Gastrocnemius medialis (tissue), 4 donors: ENCODE measurements at regions of chr15 and their contacts with region 1.

Region 1: DNA sequence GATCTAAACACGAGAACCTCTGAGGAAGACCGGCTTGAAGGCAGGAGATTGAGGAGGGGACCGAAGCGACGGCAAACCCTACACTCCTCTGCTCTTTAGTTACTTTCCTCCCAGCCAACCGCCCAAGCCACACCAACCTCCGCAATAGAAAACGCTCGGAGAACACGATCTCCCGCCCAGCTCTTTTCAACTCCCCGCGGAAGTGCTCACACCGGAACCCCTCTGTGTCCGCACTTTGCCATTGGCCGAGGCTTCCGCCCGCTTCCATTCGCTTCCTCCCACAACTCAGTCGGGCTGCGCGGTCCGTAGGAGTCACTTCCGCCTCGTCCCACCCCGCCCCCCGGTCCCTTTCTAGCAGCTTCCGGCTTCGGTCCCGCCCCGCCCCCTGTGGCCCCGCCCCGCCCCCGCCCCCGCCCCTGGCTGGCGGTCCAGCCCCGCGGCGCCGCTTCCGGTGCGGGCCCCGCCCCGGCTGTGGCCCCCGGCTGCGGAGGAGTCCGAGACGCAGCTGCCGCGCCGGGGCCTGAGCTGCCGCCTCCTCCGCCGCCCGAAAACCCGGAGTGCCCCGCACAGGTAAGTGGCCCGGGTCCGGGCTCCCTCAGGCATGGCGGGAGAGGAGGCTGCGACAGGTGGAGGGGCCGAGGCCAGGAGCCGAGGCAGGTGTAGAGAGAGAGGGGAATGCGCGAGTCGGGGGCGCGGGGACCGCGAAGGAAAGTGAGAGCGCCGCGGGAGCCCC is at the start of gene ARID3B:
- DNase-seq: peak; percentile 97
- ATAC-seq: peak; percentile 96 to 99
- H3K4me3 ChIP-seq: peak within 1 kb of the TSS; percentile 79 to 100 (median 91)
- H3K27ac ChIP-seq: peak within 1 kb of the TSS; percentile 81 to 90 (median 86)
- H3K4me1 ChIP-seq: peaks cover 22 to 24% of the 10 kb centered on the region in 2 donors
- H3K27me3 ChIP-seq: no peaks in the 10 kb centered on the region
- CTCF ChIP-seq: no peak
- POLR2A ChIP-seq: peak; percentile 64 to 77
- total RNA-seq, gene ARID3B: 1.8 to 6.7 (median 4.6) TPM

Region 2: GRCh38 chr15:73991726-73992593 is 549.0 kb before region 1 on chr15 and contains the start of gene STOML1:
- in situ Hi-C with region 1: no loop called
- intact Hi-C with region 1: loop called (anchors 5 kb)
- DNase-seq: peak; percentile 76 to 90
- ATAC-seq: peak; percentile 75 to 77
- H3K4me3 ChIP-seq: peak within 1 kb of the TSS; percentile 82 to 96 (median 91)
- H3K27ac ChIP-seq: peak within 1 kb of the TSS; percentile 88 to 94 (median 90)
- H3K4me1 ChIP-seq: peaks cover 65 to 78% of the 10 kb centered on the region in 2 donors
- H3K27me3 ChIP-seq: no peaks in the 10 kb centered on the region
- CTCF ChIP-seq: peak; percentile 81 to 97 (median 96)
- POLR2A ChIP-seq: peak; percentile 77
- total RNA-seq, gene STOML1: 15.2 to 28.8 (median 16.9) TPM

Region 3: DNA sequence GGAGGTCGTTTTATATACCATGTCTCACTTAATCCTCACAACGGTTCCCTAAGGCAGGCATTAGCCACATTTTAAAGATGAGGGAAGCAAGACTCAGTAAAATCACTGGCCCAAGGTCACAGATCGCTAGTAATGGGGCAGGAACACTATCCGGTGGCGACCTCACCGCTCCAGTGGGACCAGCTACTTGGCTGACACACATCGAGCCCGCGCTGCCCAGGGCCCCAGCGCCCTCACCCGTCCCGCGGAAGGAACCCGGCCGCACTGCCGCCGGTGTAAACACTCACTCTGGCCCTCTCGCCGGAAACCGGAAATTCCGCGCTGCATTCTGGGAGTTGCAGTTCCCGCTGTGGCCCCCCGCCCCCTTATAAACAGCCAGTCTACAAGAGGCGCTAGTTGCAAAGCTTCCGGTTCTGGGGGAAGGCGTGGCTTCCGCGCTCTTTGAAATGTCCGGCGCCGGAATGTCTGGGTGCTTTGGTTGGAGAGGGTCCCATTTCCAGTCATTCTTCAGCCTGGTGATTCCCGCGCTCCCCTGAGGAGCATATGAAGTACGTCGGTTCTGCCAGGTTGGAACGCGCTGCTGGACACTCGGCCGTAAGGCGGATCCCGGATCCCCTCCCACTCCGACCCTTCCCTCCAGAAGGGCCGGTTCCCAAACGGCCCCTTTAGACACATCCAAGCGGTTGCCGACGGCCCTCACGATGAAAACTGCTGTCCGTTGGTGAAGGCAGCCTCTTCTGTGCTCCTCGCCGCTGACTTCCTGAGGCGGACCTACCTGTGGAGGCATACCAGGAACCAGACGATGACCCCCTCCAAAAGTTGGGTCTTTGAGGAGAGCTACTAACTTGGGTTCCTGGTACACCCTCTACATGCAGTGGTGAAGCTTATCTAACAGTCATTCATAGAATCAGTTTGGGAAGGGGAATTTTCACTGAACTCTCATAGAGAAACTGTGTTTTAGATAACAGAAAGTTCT is 79.8 kb before region 1 on chr15 and contains the start of gene UBL7:
- in situ Hi-C with region 1: loop called in 1 of 4 experiments (anchors 10 kb)
- intact Hi-C with region 1: loop called (anchors 2 kb)
- DNase-seq: peak; percentile 97 to 99
- ATAC-seq: peak; percentile 96 to 97
- H3K4me3 ChIP-seq: peak within 1 kb of the TSS; percentile 64 to 86 (median 74)
- H3K27ac ChIP-seq: peak within 1 kb of the TSS; percentile 87 to 99 (median 92)
- H3K4me1 ChIP-seq: peaks cover 22 to 24% of the 10 kb centered on the region in 2 donors
- H3K27me3 ChIP-seq: no peaks in the 10 kb centered on the region
- CTCF ChIP-seq: peak in 1 of 5 experiments; percentile 12
- POLR2A ChIP-seq: peak; percentile 91 to 96
- total RNA-seq, gene UBL7: 66.4 to 139 (median 83.2) TPM

Region 4: GRCh38 chr15:74598126-74598842 is 57.4 kb after region 1 on chr15:
- in situ Hi-C with region 1: no loop called
- intact Hi-C with region 1: loop called (anchors 2 kb)
- DNase-seq: peak; percentile 92 to 96
- ATAC-seq: peak; percentile 97 to 98
- H3K4me3 ChIP-seq: peak overlapping the region; percentile 66 to 75 (median 69)
- H3K27ac ChIP-seq: peak overlapping the region; percentile 84 to 92 (median 89)
- H3K4me1 ChIP-seq: peaks cover 18 to 19% of the 10 kb centered on the region in 2 donors
- H3K27me3 ChIP-seq: no peaks in the 10 kb centered on the region
- CTCF ChIP-seq: no peak
- POLR2A ChIP-seq: peak; percentile 59 to 83

Region 5: DNA sequence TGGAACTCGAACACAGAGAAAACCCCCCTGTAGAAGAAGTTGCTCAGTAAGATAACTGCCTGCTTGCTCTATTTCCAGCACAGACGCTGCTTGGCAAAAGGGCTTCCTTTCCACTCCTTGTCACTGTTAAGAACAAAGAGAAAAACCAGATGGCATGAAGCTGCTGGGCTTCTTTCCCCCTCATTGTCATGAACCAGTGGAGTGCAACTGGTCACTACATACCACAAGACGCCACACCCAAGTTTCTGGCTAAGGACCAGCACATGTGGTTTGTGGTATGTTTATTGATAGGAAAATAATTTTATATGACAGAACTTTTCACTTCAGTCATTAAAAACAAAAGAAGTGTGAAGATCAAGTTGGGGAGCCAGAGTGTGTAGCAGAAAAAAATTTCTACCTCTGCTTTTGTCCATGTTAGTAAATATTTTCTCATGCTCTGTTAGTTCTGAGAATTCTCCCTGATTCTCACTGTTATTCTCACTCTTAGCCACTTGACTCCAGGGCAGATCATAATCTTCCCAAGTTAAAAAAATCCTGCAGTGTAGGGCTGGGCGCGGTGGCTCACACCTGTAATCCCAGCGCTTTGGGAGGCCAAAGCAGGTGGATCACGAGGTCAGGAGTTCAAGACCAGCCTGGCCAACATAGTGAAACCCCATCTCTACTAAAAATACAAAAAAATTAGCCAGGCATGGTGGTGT is 112.6 kb after region 1 on chr15:
- in situ Hi-C with region 1: no loop called
- intact Hi-C with region 1: no loop called
- DNase-seq: no peak
- ATAC-seq: no peak
- H3K4me3 ChIP-seq: no peak overlapping the region
- H3K27ac ChIP-seq: peak overlapping the region; percentile 64 to 89 (median 71)
- H3K4me1 ChIP-seq: peaks cover 66 to 78% of the 10 kb centered on the region in 2 donors
- H3K27me3 ChIP-seq: no peaks in the 10 kb centered on the region
- CTCF ChIP-seq: no peak
- POLR2A ChIP-seq: no peak

Region 6: DNA sequence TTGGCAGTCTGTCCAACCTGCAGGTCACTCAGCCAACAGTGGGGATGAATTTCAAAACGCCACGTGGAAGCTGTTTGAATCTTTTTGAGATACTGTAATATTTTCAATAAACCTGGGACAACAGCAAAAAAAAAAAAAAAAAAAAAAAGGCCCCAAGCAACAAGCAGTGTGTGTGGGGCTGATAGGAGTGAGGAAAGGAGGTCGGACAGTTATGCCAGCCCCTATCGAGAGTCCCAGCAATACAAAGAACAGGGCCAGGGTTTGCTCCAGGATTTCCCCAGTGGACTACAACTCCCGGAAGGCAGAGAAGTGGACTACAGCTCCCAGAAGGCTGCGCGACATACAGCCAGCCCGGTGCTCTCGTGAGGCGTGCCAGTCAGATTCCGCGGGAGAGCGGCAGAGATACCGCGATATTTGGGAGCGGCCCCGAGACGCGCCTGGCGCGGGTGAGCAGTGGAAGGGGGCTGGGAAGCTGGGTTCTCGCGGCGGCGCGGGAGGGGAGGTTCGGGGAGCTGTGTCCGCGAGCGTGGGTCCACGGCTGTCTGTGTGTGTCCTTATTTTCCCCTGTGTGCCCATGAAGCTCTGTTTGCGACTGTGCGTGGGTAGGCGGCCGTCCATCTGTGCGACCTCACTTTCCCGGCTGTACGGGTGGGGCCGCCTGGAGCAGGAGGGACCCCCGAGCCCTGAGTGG is 482.4 kb after region 1 on chr15 and contains the start of gene PPCDC:
- in situ Hi-C with region 1: no loop called
- intact Hi-C with region 1: loop called (anchors 5 kb)
- DNase-seq: peak; percentile 95
- ATAC-seq: peak; percentile 97 to 98
- H3K4me3 ChIP-seq: peak within 1 kb of the TSS; percentile 80 to 92 (median 84)
- H3K27ac ChIP-seq: peak within 1 kb of the TSS; percentile 88 to 96 (median 90)
- H3K4me1 ChIP-seq: peaks cover 0 to 14% of the 10 kb centered on the region in 2 donors
- H3K27me3 ChIP-seq: no peaks in the 10 kb centered on the region
- CTCF ChIP-seq: no peak
- POLR2A ChIP-seq: peak; percentile 82 to 87
- total RNA-seq, gene PPCDC: 5.5 to 20.2 (median 11.9) TPM